Dorsolateral prefrontal cortex (tissue), 120 donors: ENCODE measurements at regions of chr10 and their contacts with region 1.

Region 1: GRCh38 chr10:78579995-78580394 is 488.8 kb upstream of the ZMIZ1 start:
- DNase-seq: peak; percentile 82 to 94 (median 87)
- H3K4me3 ChIP-seq: no peak overlapping the region
- H3K27ac ChIP-seq: peak overlapping the region in 53 of 59 donors; percentile 13 to 88 (median 67)
- H3K27me3 ChIP-seq: no peaks in the 10 kb centered on the region
- CTCF ChIP-seq: peak in 13 of 56 donors; percentile 8 to 50 (median 14)

Region 2: GRCh38 chr10:78470267-78471103 is 109.5 kb before region 1 on chr10:
- intact Hi-C with region 1: no loop called
- DNase-seq: peak in 1 of 10 donors; percentile 30
- H3K4me3 ChIP-seq: no peak overlapping the region
- H3K27ac ChIP-seq: peak overlapping the region in 1 of 59 donors; percentile 8
- H3K27me3 ChIP-seq: no peaks in the 10 kb centered on the region
- CTCF ChIP-seq: no peak

Region 3: GRCh38 chr10:78657163-78657861 is 77.3 kb after region 1 on chr10:
- intact Hi-C with region 1: loop called in 1 of 2 experiments (anchors 5 kb)
- DNase-seq: peak; percentile 19 to 70 (median 58)
- H3K4me3 ChIP-seq: peak overlapping the region in 2 of 59 donors; percentile 9 to 25
- H3K27ac ChIP-seq: peak overlapping the region in 4 of 59 donors; percentile 8 to 54 (median 15)
- H3K27me3 ChIP-seq: no peaks in the 10 kb centered on the region
- CTCF ChIP-seq: peak in 55 of 56 donors; percentile 23 to 73 (median 61)

Region 4: DNA sequence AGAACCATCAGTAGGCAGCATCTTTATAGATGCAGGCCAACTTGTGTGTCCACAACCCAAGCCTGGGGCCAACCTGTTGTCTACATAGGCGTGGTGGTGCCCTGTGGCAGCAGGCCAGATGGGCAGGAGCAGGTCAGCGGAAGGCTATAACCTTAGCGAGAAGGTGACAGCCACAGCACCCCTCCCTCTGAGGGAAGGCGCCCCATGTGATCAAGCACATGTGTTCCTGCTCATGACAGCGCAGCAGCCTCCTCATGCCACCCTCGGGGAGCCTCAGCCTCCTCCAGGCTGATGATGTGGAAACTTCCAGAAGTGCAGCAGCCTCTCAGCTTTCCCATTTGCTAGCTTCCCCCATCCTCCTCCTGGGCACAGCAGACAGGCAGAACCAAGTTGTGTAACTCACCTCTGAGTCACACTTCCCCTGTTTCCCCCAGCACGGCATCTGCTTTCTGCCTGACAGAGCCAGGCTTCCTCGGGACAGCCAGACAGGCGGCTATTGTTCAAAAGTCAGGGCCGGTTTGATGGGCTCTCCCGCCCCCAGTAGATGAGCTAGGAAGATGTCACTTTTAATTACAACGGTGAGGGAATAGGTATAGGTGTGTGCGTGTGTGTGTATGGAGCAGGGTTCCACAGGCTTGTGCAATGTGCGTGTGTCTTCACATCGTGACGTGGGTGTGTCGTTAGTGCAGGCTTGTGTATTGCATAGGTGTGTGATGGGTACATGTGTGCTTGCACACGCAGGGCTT is 176.8 kb after region 1 on chr10:
- intact Hi-C with region 1: loop called in 1 of 2 experiments (anchors 10 kb)
- DNase-seq: peak in 9 of 10 donors; percentile 45 to 91 (median 74)
- H3K4me3 ChIP-seq: no peak overlapping the region
- H3K27ac ChIP-seq: peak overlapping the region in 44 of 59 donors; percentile 2 to 76 (median 56)
- H3K27me3 ChIP-seq: no peaks in the 10 kb centered on the region
- CTCF ChIP-seq: peak in 8 of 56 donors; percentile 6 to 39 (median 18)

Region 5: DNA sequence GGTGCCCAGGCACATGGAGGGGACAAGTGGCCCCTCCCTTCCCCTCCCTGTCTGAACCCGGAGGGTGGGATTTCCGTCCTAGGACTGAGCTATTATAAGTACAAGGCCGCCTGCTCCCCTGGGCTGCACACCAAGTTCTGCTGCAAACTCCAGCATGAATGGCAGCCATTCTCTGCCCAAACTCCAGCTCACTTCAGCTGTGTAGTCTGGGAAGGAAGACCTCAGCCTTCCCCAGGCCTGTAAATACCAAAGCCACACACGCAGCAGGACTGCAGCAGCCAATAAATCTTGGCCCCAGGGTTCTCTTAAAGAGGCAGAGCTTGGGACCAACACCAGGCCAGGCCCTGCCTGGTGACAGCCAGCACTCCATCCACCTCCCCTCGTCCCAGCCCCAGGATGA is 197.5 kb after region 1 on chr10:
- intact Hi-C with region 1: loop called in 1 of 2 experiments (anchors 5 kb)
- DNase-seq: peak; percentile 19 to 89 (median 80)
- H3K4me3 ChIP-seq: no peak overlapping the region
- H3K27ac ChIP-seq: peak overlapping the region in 57 of 59 donors; percentile 3 to 92 (median 73)
- H3K27me3 ChIP-seq: no peaks in the 10 kb centered on the region
- CTCF ChIP-seq: peak in 13 of 56 donors; percentile 6 to 43 (median 11)

Region 6: DNA sequence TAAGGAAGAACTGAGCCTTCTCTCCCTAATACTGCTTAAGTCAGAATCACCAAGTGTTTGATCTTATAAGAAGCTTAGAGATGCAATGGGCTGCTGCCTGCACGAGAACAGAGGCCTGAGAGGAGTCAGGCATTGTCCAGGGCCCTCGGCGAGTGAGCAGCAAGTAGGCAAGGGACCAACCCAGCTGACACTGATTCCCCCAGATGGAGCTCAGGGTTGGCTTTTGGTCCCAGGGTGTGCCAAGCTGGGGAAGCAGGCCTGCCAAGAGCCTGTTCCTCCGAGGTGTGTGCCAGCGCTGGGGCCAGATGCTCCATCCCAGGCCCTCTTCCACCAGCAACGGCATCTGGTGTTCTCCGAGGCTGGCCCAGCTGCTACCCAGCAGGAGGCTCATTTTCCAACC is 266.8 kb after region 1 on chr10:
- intact Hi-C with region 1: loop called in 1 of 2 experiments (anchors 10 kb)
- DNase-seq: peak; percentile 45 to 83 (median 67)
- H3K4me3 ChIP-seq: no peak overlapping the region
- H3K27ac ChIP-seq: peak overlapping the region in 39 of 59 donors; percentile 1 to 75 (median 47)
- H3K27me3 ChIP-seq: no peaks in the 10 kb centered on the region
- CTCF ChIP-seq: peak in 1 of 56 donors; percentile 14

Region 7: GRCh38 chr10:78960316-78960800 is 380.4 kb after region 1 on chr10:
- intact Hi-C with region 1: loop called in 1 of 2 experiments (anchors 5 kb)
- DNase-seq: peak in 4 of 10 donors; percentile 37 to 69 (median 54)
- H3K4me3 ChIP-seq: no peak overlapping the region
- H3K27ac ChIP-seq: peak overlapping the region in 3 of 59 donors; percentile 10 to 38 (median 38)
- H3K27me3 ChIP-seq: no peaks in the 10 kb centered on the region
- CTCF ChIP-seq: no peak